ENCODE measurements at regions of chr7 and their contacts with region 1.

Region 1: GRCh38 chr7:98168181-98168905 is 42.9 kb upstream of the BHLHA15 start:
- H3K4me3 ChIP-seq: no peak overlapping the region
- H3K27ac ChIP-seq: no peak overlapping the region
- H3K4me1 ChIP-seq: no peaks in the 10 kb centered on the region
- CTCF ChIP-seq: peak; percentile 40; the same call in 1 of the 2 replicates

Region 2: GRCh38 chr7:98097042-98097645 is 71.2 kb before region 1 on chr7:
- CTCF ChIA-PET with region 1: interaction called, 11 read pairs
- POLR2A ChIA-PET with region 1: no interaction called
- H3K4me3 ChIP-seq: no peak overlapping the region
- H3K27ac ChIP-seq: no peak overlapping the region
- H3K4me1 ChIP-seq: no peaks in the 10 kb centered on the region
- CTCF ChIP-seq: no peak

Region 3: DNA sequence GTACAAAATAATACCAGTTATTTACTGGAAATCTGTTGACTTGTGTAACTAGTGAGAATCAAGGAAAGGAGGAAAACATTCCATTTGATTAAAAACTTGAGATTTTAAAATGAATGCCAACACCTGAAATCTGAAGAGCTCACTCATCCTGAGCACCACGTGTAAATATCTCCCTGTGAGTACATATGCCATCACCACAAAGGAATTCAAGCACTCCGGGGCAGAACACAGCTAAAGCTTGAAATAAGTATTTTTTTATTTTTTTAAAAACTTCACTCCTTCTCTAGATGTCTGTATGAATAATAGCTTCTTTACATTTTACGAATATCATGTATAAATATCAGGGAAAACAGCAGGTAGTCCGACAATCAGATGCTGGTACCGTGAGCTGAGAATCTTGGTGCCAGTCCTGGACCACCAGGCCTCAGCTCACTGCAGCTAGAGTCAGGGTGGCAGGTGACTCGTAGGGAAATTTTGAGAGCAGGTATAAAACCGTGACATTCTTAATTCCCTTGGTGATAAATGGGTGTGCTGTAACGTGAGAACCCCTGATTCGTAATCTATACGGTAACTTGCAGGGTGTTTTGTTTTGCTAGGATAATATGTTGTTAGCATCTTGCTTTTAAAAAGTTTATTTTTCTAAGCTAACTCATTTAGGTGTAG is 49.0 kb before region 1 on chr7:
- CTCF ChIA-PET with region 1: interaction called, 10 read pairs
- POLR2A ChIA-PET with region 1: no interaction called
- H3K4me3 ChIP-seq: no peak overlapping the region
- H3K27ac ChIP-seq: no peak overlapping the region
- H3K4me1 ChIP-seq: peaks cover 41% of the 10 kb centered on the region
- CTCF ChIP-seq: no peak

Region 4: GRCh38 chr7:98157761-98158160 is 10.6 kb before region 1 on chr7:
- CTCF ChIA-PET with region 1: interaction called, 14 read pairs
- POLR2A ChIA-PET with region 1: no interaction called
- H3K4me3 ChIP-seq: no peak overlapping the region
- H3K27ac ChIP-seq: no peak overlapping the region
- H3K4me1 ChIP-seq: no peaks in the 10 kb centered on the region
- CTCF ChIP-seq: no peak

Measured in HEK293 (cell line).